A549 (cell line): ENCODE measurements at regions of chr7 and their contacts with region 1.

Region 1: DNA sequence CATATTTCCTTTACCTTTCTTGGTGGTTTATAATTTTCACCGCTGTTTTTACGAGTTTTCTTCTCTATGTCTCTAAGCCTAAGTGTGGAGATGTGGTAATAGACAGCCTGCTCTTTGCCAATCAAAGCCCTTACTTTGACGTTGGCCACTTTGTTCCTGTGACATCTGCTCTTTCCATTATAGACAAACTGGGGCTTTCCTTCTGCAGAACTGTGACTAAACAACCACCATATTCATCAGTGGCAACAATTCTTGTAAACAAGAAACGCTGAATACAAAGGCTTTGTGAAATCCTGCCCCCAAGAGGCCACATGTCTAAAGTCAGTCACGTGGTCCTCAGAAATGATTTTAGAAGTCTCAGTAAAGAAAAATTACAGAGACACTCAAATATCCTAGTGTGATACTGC is 59.6 kb upstream of the CAPZA2 start:
- DNase-seq: peak; percentile 51 to 84
- ATAC-seq: peak; percentile 47 to 54
- H3K4me3 ChIP-seq: no peak overlapping the region
- H3K27ac ChIP-seq: peak overlapping the region; percentile 80 to 88
- H3K4me1 ChIP-seq: peaks cover 76% of the 10 kb centered on the region
- CTCF ChIP-seq: peak; percentile 68
- EP300 ChIP-seq: no peak
- POLR2A ChIP-seq: no peak
- RAD21 ChIP-seq: peak; percentile 68

Region 2: DNA sequence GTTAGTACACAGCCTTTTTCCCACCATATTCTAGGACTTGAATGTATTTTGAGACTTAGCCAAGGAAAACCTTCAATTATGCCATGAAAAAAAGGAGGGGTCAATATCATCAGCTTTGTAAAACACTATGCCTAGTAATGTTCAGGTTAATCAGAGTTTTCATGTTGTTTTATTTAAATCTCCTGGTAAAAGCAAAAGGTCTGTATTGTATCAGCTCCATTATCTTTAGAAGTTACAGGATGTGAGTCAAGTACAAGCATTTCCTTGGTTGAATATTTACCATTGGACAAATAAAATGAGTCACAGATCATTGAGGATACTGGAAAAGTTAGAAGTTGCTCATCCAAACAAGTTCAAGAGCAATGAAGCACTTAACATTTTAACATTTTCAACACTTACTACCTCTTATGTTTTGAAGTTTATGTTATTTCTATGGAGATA is 30.3 kb before region 1 on chr7:
- CTCF ChIA-PET with region 1: interaction called, 14 read pairs
- POLR2A ChIA-PET with region 1: no interaction called
- DNase-seq: peak; percentile 85 to 88
- ATAC-seq: peak; percentile 75 to 87
- H3K4me3 ChIP-seq: peak overlapping the region; percentile 17; the same call in 1 of the 3 replicates
- H3K27ac ChIP-seq: peak overlapping the region; percentile 88 to 90
- H3K4me1 ChIP-seq: peaks cover 77% of the 10 kb centered on the region
- CTCF ChIP-seq: no peak
- EP300 ChIP-seq: peak; percentile 45 to 57; a peak in 2 of 5 replicates
- POLR2A ChIP-seq: no peak
- RAD21 ChIP-seq: no peak; a peak in 1 of 5 replicates

Region 3: GRCh38 chr7:116942504-116942903 is 139.8 kb after region 1 on chr7:
- CTCF ChIA-PET with region 1: no interaction called
- POLR2A ChIA-PET with region 1: no interaction called
- DNase-seq: no peak
- ATAC-seq: no peak
- H3K4me3 ChIP-seq: no peak overlapping the region
- H3K27ac ChIP-seq: no peak overlapping the region
- H3K4me1 ChIP-seq: no peaks in the 10 kb centered on the region
- CTCF ChIP-seq: no peak
- EP300 ChIP-seq: no peak
- POLR2A ChIP-seq: no peak
- RAD21 ChIP-seq: no peak